GM12878 (cell line): ENCODE measurements at regions of chr2 and their contacts with region 1.

Region 1: GRCh38 chr2:31523871-31524492 is 56.8 kb downstream of the SRD5A2 start:
- DNase-seq: no peak
- ATAC-seq: peak; percentile 89
- H3K4me3 ChIP-seq: no peak overlapping the region
- H3K27ac ChIP-seq: no peak overlapping the region
- H3K4me1 ChIP-seq: no peaks in the 10 kb centered on the region
- H3K27me3 ChIP-seq: peaks cover 0 to 2% of the 10 kb centered on the region in 2 experiments; a peak in 3 of 4 replicates
- CTCF ChIP-seq: peak; percentile 64 to 74 (median 65)
- EP300 ChIP-seq: no peak
- POLR2A ChIP-seq: no peak
- RAD21 ChIP-seq: peak; percentile 48; the same call in 1 of the 2 replicates

Region 2: GRCh38 chr2:31413862-31414550 is 110.0 kb before region 1 on chr2:
- CTCF ChIA-PET with region 1: interaction called, 4 read pairs
- POLR2A ChIA-PET with region 1: interaction called, 5 read pairs
- RAD21 ChIA-PET with region 1: no interaction called
- SMC1A ChIA-PET with region 1: interaction called, 6 read pairs
- in situ Hi-C with region 1: no loop called
- intact Hi-C with region 1: loop called (anchors 5 kb)
- DNase-seq: no peak
- ATAC-seq: peak; percentile 81
- H3K4me3 ChIP-seq: no peak overlapping the region
- H3K27ac ChIP-seq: no peak overlapping the region
- H3K4me1 ChIP-seq: no peaks in the 10 kb centered on the region
- H3K27me3 ChIP-seq: no peaks in the 10 kb centered on the region
- CTCF ChIP-seq: peak in 1 of 3 experiments; percentile 35; a peak in 2 of 6 replicates
- EP300 ChIP-seq: no peak
- POLR2A ChIP-seq: no peak
- RAD21 ChIP-seq: no peak

Region 3: GRCh38 chr2:31506567-31506966 is 17.4 kb before region 1 on chr2:
- CTCF ChIA-PET with region 1: interaction called, 23 read pairs
- POLR2A ChIA-PET with region 1: no interaction called
- RAD21 ChIA-PET with region 1: no interaction called
- SMC1A ChIA-PET with region 1: interaction called, 4 read pairs
- in situ Hi-C with region 1: no loop called
- intact Hi-C with region 1: no loop called
- DNase-seq: no peak
- ATAC-seq: no peak
- H3K4me3 ChIP-seq: no peak overlapping the region
- H3K27ac ChIP-seq: no peak overlapping the region
- H3K4me1 ChIP-seq: no peaks in the 10 kb centered on the region
- H3K27me3 ChIP-seq: no peaks in the 10 kb centered on the region
- CTCF ChIP-seq: no peak
- EP300 ChIP-seq: no peak
- POLR2A ChIP-seq: no peak
- RAD21 ChIP-seq: no peak

Region 4: DNA sequence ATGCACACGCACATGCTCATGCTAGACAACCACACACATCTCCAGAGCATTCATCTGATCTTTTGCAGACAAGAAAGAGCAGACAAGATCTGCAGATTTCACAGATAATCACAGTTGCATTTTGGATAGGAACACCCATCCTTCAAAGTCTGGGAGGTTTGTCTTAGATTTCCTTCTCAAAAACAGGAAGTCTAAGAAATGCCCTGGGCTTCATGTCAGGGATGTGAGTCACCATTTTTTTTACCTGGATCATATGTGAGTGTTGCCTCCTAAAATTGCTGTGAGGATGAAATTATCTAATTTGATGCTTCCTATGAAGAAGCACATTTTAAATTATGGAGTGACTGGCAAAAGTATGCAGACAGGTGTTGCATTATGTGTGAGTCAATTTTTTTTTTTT is 10.7 kb after region 1 on chr2:
- CTCF ChIA-PET with region 1: interaction called, 26 read pairs
- POLR2A ChIA-PET with region 1: no interaction called
- RAD21 ChIA-PET with region 1: no interaction called
- SMC1A ChIA-PET with region 1: interaction called, 3 read pairs
- in situ Hi-C with region 1: no loop called
- intact Hi-C with region 1: no loop called
- DNase-seq: no peak
- ATAC-seq: no peak
- H3K4me3 ChIP-seq: no peak overlapping the region
- H3K27ac ChIP-seq: no peak overlapping the region
- H3K4me1 ChIP-seq: no peaks in the 10 kb centered on the region
- H3K27me3 ChIP-seq: no peaks in the 10 kb centered on the region
- CTCF ChIP-seq: no peak
- EP300 ChIP-seq: no peak
- POLR2A ChIP-seq: no peak
- RAD21 ChIP-seq: no peak